Heart left ventricle (tissue), 16 donors: ENCODE measurements at regions of chr16 and their contacts with region 1.

Region 1: DNA sequence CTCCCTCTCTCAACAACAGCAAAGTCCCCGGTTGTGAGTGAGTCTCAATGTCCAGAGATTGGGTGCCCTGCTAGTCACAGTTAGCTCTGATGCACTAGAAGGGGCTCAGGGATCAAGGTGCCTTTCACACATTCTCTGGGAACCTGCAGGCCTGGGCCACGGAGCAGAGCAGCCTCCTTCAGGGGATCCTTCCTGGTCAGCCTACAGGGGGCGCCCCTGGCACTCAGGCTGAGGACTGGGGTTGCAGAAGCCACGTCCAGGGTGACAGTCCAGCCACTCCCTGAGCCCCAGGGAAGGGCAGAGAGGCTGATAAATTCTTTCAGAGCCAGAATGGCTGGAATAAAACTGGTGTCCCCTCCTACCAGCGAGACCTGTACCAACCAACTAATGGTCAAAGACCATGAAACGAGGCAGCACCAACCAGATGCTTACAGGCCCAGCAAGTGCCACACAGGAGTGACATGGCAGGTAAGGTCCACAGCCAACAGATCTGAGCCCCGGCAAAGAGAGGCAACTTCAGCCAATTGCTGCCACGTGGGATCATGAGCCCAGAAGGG is 43.5 kb downstream of the ST3GAL2 start:
- DNase-seq: peak; percentile 57 to 88 (median 75)
- ATAC-seq: peak; percentile 60 to 84 (median 76)
- H3K4me3 ChIP-seq: no peak overlapping the region
- H3K27ac ChIP-seq: no peak overlapping the region
- H3K4me1 ChIP-seq: peaks cover 0 to 26% (median 9%) of the 10 kb centered on the region in 12 donors
- H3K27me3 ChIP-seq: no peaks in the 10 kb centered on the region
- CTCF ChIP-seq: peak; percentile 61 to 88 (median 72)
- POLR2A ChIP-seq: no peak

Region 2: DNA sequence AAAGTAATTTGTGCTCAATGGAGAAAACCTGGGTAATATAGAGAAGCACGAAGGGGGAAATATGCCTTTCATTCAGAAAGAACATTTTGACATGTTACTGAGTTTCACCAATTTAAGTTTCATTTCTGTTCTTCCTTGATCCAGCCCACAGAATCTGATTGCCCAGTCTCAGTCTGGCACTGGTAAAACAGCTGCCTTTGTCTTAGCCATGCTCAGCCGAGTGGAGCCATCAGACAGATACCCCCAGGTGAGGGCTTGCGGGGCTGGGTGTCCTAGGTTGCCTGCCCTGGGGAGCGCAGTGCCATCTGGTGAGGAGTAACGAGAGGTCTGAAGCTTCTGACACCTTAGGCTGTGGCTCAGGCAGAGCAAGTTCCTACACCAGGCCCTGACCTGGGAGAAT is 31.0 kb before region 1 on chr16:
- intact Hi-C with region 1: no loop called
- DNase-seq: no peak
- ATAC-seq: no peak
- H3K4me3 ChIP-seq: no peak overlapping the region
- H3K27ac ChIP-seq: no peak overlapping the region
- H3K4me1 ChIP-seq: no peaks in the 10 kb centered on the region
- H3K27me3 ChIP-seq: no peaks in the 10 kb centered on the region
- CTCF ChIP-seq: no peak
- POLR2A ChIP-seq: no peak

Region 3: GRCh38 chr16:70438969-70439862 is 43.8 kb after region 1 on chr16 and contains the start of gene ST3GAL2:
- intact Hi-C with region 1: loop called in 3 of 10 experiments (anchors 5 kb)
- DNase-seq: peak; percentile 96 to 98 (median 96)
- ATAC-seq: peak; percentile 98 to 99 (median 98)
- H3K4me3 ChIP-seq: peak within 1 kb of the TSS; percentile 42 to 98 (median 80)
- H3K27ac ChIP-seq: peak within 1 kb of the TSS; percentile 50 to 85 (median 78)
- H3K4me1 ChIP-seq: peaks cover 0 to 48% (median 27%) of the 10 kb centered on the region in 12 donors
- H3K27me3 ChIP-seq: no peaks in the 10 kb centered on the region
- CTCF ChIP-seq: peak in 5 of 12 donors; percentile 6 to 41 (median 29)
- POLR2A ChIP-seq: no peak
- total RNA-seq, gene ST3GAL2: 16.7 to 44.6 (median 20.1) TPM

Region 4: DNA sequence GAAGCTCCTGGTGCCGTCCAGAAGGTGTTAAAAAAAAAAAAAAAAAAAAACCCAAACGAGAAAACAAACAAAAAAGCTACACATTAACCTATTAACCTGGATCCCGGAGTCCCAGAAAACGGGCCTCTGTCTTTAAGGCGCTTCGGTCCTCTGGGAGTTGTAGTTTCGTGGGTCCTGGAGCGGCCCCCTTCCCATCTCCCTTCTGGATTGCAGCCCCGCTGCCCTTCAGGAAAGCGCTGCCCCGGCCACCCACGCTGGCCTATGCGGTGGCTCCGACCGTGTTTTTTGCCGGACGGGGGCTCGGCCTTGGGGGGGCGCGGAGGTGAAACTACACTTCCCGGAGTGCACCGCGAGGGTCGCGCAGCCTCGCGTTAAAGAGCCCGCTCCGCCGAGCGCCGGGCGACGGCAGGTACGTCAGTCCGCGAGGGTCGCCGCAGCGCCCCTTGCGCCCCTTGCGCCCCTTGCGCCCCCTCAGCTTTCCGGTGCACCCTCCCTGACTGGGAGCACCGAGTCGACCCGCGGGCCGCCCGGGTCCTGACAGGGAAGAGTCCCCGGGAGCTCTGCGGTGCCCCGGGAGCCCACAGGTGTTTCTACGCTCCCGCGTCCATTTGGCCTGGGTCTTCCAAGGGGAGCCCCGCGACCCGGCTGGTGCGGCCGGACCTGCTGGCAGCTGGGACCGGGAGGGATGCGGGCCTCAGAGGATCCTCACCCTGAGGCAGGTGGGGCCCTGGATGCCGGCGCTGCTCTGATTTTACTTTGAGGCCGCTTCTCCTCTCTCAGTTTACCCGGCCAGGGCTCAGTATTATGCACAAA is 59.0 kb after region 1 on chr16 and contains the start of gene FCSK:
- intact Hi-C with region 1: loop called in 1 of 10 experiments (anchors 10 kb)
- DNase-seq: peak; percentile 61 to 85 (median 72)
- ATAC-seq: peak; percentile 59 to 95 (median 94)
- H3K4me3 ChIP-seq: peak within 1 kb of the TSS; percentile 76 to 99 (median 93)
- H3K27ac ChIP-seq: peak within 1 kb of the TSS; percentile 88 to 98 (median 94)
- H3K4me1 ChIP-seq: peaks cover 0 to 26% (median 12%) of the 10 kb centered on the region in 12 donors
- H3K27me3 ChIP-seq: no peaks in the 10 kb centered on the region
- CTCF ChIP-seq: peak in 3 of 12 donors; percentile 4 to 16 (median 7)
- POLR2A ChIP-seq: peak in 1 of 2 donors; percentile 36
- total RNA-seq, gene FCSK: 6.5 to 17.3 (median 8.2) TPM

Region 5: DNA sequence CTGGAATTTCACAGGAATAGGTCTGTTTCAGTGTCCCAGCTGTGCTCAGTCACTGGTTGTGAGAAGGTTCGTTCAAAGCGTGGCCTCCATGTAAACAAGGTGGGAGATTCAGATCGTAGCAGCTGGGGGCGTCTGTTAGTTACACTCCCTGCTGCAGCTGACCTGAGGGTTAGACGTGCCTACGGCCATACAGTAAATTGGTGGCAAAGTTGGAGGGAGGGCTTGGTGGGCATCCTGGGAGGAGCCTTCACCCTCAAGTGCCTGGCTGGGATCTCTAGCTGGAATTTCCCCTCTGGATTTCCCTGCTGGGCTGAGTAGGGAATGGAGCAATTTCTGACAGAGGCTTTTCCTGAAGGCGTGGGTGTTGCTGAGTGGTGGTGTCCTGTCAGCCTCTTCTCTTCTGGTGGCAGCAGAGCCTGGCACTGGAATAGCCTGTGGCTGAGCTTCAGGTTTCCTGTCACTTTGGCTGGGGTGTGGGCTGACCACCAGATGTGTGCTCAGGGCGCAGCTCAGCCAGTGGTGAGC is 65.4 kb after region 1 on chr16:
- intact Hi-C with region 1: loop called in 3 of 10 experiments (anchors 5 to 10 kb)
- DNase-seq: no peak
- ATAC-seq: peak; percentile 55 to 84 (median 80)
- H3K4me3 ChIP-seq: no peak overlapping the region
- H3K27ac ChIP-seq: peak overlapping the region in 1 of 12 donors; percentile 13
- H3K4me1 ChIP-seq: peaks cover 0 to 19% (median 6%) of the 10 kb centered on the region in 12 donors
- H3K27me3 ChIP-seq: no peaks in the 10 kb centered on the region
- CTCF ChIP-seq: no peak
- POLR2A ChIP-seq: no peak

Region 6: DNA sequence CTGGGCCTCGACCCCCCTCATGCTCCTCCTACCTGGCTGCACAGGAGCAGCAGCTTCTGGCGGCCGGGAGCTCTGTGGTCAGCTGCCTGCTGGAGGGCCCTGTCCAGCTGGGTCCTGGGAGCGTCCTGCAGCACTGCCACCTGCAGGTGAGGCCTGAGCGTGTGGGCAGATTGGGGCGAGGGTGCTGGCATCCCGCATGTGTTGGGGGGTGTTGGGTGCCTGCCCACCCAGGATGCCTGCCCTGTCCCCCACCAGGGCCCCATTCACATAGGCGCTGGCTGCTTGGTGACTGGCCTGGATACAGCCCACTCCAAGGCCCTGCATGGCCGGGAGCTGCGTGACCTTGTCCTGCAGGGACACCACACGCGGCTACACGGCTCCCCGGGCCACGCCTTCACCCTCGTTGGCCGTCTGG is 75.5 kb after region 1 on chr16:
- intact Hi-C with region 1: loop called in 5 of 10 experiments (anchors 5 to 10 kb)
- DNase-seq: peak in 3 of 5 donors; percentile 56 to 69 (median 65)
- ATAC-seq: peak; percentile 56 to 81 (median 69)
- H3K4me3 ChIP-seq: no peak overlapping the region
- H3K27ac ChIP-seq: no peak overlapping the region
- H3K4me1 ChIP-seq: peaks cover 0 to 5% (median 0%) of the 10 kb centered on the region in 12 donors
- H3K27me3 ChIP-seq: no peaks in the 10 kb centered on the region
- CTCF ChIP-seq: peak in 11 of 12 donors; percentile 11 to 58 (median 45)
- POLR2A ChIP-seq: no peak

Region 7: DNA sequence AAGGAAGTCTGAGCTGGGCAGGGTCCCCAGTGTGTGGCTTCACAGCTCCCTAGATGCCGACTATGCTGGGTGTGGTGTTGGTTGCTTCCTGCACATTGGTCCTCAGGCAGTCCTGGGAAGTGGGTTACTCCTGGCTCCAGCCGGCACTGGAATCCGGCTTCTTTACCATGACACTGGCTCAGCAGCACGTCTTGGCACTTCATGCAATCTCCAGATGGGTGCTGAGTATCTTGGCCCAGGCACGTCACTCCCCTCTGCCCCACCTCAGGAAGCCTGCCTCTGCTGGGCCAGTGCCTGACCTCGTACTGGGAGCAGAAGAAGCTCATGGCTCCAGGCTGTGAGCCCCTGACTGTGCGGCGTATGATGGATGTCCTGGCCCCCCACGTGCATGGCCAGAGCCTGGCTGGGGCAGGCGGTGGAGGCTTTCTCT is 83.5 kb after region 1 on chr16:
- intact Hi-C with region 1: loop called in 4 of 10 experiments (anchors 5 to 10 kb)
- DNase-seq: peak in 3 of 5 donors; percentile 53 to 66 (median 59)
- ATAC-seq: peak in 3 of 4 donors; percentile 45 to 60 (median 45)
- H3K4me3 ChIP-seq: no peak overlapping the region
- H3K27ac ChIP-seq: peak overlapping the region in 11 of 12 donors; percentile 30 to 73 (median 63)
- H3K4me1 ChIP-seq: peaks cover 0 to 32% (median 24%) of the 10 kb centered on the region in 12 donors
- H3K27me3 ChIP-seq: no peaks in the 10 kb centered on the region
- CTCF ChIP-seq: no peak
- POLR2A ChIP-seq: no peak